ENCODE measurements at regions of chr14 and their contacts with region 1.

Region 1: GRCh38 chr14:73295198-73295796 is 58.0 kb downstream of the PAPLN start:
- DNase-seq: peak; percentile 44 to 65

Region 2: GRCh38 chr14:73049428-73049827 is 245.9 kb before region 1 on chr14:
- in situ Hi-C with region 1: no loop called
- DNase-seq: no peak

Region 3: DNA sequence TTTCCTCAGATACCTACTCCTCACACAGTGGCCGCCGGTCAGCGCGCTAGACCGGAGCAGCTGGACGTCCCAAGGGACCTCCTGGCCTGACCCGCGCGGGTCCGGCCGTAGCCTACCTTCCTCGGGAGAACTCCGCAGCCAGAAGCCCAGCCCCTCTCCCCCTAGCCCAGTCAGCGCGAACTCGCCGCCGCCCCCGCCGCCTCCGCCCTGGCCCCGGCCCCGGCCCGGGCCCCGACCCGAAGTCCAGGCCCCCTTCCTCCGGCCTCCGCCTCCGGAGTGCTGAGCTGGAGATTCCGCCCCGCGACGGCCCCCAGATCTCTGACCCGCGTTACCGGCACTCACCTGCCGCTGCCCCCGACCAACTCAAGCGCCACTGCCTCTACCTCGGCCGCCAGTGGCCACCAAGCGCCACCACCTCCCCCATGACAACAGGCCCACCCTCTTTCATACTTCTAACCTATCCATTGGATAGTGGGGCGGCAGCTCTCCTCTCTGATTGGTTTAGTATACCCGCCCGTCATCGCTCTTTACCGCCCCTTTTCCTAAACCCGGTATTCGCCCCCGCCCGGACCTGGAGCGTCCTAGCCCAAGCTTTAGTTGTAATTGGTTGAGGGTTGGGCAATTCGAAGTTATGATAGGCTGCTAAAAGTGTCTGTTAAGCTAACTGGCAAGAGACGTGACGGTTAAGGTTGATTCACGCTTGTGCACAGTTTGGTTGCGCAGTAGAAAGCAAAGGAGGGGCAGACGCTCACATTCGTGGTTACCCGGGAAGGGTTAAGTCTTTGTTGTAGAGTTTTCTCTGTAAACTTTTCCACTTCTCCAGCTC is 163.1 kb after region 1 on chr14 and contains the start of gene NUMB:
- in situ Hi-C with region 1: loop called (anchors 25 kb)
- DNase-seq: peak; percentile 99 to 100

Measured in T47D (cell line).